ENCODE measurements at regions of chr6 and their contacts with region 1.

Region 1: DNA sequence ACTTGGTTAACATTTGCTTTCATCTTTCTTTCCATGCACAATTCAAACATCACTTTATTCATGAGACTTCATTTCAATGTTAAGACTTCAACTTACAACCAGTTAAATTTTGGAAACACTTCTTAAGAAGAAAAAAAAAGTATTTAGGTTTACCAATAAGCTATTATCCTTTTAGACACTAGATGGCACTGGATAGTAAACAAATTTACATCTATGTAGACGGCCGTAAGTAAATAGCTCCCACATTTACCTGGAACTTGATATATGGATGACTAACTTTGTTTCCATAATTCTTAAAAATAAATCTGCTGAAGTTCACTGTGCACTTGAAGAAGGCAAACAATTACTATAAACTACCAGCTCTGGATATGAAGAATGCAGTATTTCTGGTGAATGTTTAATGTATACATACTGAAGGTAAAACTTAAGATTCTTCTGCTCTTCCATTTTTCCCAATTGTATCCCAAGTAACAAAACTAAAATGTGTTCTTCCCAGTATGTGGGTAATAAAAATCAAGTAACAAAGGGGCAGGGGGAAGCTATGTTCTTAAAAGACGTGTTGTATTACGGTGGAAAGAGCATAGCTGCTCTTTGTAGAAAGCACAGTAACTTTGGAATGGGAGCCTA is 130.6 kb upstream of the C6orf118 start:
- H3K4me3 ChIP-seq: no peak overlapping the region
- H3K27ac ChIP-seq: no peak overlapping the region
- H3K4me1 ChIP-seq: no peaks in the 10 kb centered on the region; the same call in 1 of the 2 replicates
- CTCF ChIP-seq: no peak

Region 2: DNA sequence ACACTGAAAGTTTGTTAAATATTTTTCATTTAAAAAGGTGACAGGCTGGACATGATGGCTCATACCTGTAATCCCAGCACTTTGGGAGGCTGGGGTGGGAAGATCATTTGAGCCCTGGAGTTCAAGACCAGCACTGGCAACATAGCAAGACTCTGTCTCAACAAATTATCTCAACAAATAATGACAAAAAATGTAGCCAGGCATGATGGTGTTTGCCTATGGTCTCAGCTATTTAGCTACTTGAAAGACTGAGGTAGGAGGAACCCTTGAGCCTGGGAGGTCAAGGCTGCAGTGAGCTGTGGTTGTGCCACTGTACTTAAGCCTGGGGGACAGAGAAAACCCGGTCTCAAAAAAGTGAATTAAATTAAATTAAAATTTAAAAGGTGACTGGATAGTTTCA is 74.7 kb before region 1 on chr6:
- CTCF ChIA-PET with region 1: no interaction called
- POLR2A ChIA-PET with region 1: no interaction called
- H3K4me3 ChIP-seq: no peak overlapping the region
- H3K27ac ChIP-seq: no peak overlapping the region
- H3K4me1 ChIP-seq: no peaks in the 10 kb centered on the region
- CTCF ChIP-seq: no peak

Region 3: GRCh38 chr6:165426892-165427291 is 13.1 kb before region 1 on chr6:
- CTCF ChIA-PET with region 1: interaction called, 10 read pairs
- POLR2A ChIA-PET with region 1: no interaction called
- H3K4me3 ChIP-seq: no peak overlapping the region
- H3K27ac ChIP-seq: no peak overlapping the region
- H3K4me1 ChIP-seq: no peaks in the 10 kb centered on the region
- CTCF ChIP-seq: no peak

Region 4: GRCh38 chr6:165456286-165456685 is 16.2 kb after region 1 on chr6:
- CTCF ChIA-PET with region 1: interaction called, 27 read pairs
- POLR2A ChIA-PET with region 1: no interaction called
- H3K4me3 ChIP-seq: no peak overlapping the region
- H3K27ac ChIP-seq: no peak overlapping the region
- H3K4me1 ChIP-seq: peaks cover 5% of the 10 kb centered on the region; the same call in 1 of the 2 replicates
- CTCF ChIP-seq: no peak

Region 5: DNA sequence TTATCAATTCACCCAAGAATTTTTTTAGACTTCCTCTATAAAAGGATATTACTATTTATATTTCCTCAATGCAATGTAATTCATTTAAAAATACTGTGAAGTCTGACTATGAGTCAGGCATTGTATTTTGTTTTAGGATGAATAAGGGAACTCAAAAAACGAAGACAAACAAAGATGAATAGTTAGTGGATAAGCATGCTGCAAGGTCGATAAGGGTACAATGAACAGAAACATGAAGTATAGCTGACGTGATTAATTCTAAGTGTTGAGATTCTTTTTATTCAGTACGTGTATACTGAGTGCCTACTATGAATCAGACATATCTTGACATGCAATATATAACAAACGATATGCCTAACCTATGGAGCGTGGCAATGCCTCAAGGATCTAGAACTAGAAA is 117.6 kb after region 1 on chr6:
- CTCF ChIA-PET with region 1: no interaction called
- POLR2A ChIA-PET with region 1: no interaction called
- H3K4me3 ChIP-seq: no peak overlapping the region
- H3K27ac ChIP-seq: no peak overlapping the region
- H3K4me1 ChIP-seq: peaks cover 9% of the 10 kb centered on the region; the same call in 1 of the 2 replicates
- CTCF ChIP-seq: no peak

Region 6: DNA sequence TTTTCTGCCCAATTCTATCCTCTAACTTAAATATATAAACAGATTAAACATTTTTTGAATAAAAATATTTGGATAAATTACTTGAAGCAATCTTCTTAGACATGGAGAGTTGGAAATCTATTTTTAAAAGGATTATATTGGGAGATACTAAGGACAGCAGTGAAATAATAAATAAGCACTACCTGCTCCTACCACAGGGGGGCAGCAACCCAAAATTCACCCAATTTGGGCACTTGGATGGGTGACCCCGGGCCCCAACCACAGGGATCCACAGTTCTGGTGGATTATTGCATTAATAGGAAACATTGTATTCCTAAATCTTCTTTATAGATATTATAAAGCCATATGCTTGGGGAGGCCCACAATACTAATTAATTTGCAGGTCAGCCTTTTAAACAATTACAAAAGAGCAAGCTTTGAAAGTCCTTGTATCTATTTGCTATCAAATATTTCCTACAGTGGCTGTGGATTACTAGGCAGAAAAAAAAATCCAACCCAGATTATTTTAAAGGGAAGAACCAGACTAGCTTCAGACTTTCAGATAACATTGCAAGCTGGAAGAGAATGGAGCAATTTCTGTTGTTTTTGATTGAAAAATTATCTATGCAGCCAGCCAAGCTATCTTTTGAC is 289.4 kb after region 1 on chr6:
- CTCF ChIA-PET with region 1: interaction called, 13 read pairs
- POLR2A ChIA-PET with region 1: no interaction called
- H3K4me3 ChIP-seq: no peak overlapping the region
- H3K27ac ChIP-seq: no peak overlapping the region
- H3K4me1 ChIP-seq: no peaks in the 10 kb centered on the region
- CTCF ChIP-seq: 0 out of 2 replicates have a peak, but pooled peaks have one; percentile 26

Region 7: GRCh38 chr6:165850434-165851019 is 410.5 kb after region 1 on chr6:
- CTCF ChIA-PET with region 1: interaction called, 102 read pairs
- POLR2A ChIA-PET with region 1: no interaction called
- H3K4me3 ChIP-seq: no peak overlapping the region
- H3K27ac ChIP-seq: no peak overlapping the region
- H3K4me1 ChIP-seq: peaks cover 19% of the 10 kb centered on the region
- CTCF ChIP-seq: peak; percentile 66

Region 8: GRCh38 chr6:165858586-165858985 is 418.5 kb after region 1 on chr6:
- CTCF ChIA-PET with region 1: interaction called, 10 read pairs
- POLR2A ChIA-PET with region 1: no interaction called
- H3K4me3 ChIP-seq: no peak overlapping the region
- H3K27ac ChIP-seq: no peak overlapping the region
- H3K4me1 ChIP-seq: no peaks in the 10 kb centered on the region
- CTCF ChIP-seq: 0 out of 2 replicates have a peak, but pooled peaks have one; percentile 33

Region 9: DNA sequence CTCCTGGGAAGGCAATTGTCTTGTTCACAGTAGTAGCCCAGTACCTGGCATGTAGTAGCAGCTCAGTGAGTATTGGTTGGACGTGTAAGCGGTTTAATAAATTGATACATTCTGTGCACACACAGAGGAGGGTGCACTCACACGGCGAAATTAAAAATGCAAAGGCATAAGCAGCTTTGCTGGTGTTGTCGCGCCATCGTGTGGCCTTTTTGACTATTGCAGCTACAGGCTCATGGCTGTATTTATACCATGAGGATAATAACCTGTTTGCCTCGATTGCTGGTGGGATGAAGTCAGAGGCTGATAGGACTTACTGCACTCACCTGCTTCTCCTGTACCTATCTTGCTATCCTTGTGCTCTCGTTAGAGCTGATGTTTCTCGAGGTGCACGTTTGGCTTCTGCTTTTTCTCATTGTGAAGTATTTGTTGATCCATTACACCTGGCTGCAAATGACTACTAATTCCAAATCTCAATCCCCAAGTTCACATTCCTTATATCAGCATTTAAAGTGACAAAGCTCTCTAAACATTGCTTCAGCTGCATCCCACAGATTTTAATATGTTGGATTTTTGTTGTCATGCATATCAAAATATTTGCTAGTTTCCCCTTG is 666.1 kb after region 1 on chr6:
- CTCF ChIA-PET with region 1: interaction called, 20 read pairs
- POLR2A ChIA-PET with region 1: no interaction called
- H3K4me3 ChIP-seq: no peak overlapping the region
- H3K27ac ChIP-seq: no peak overlapping the region
- H3K4me1 ChIP-seq: no peaks in the 10 kb centered on the region
- CTCF ChIP-seq: peak; percentile 89

Measured in HEK293 (cell line).